Calu3 (cell line): ENCODE measurements at regions of chr4 and their contacts with region 1.

Region 1: DNA sequence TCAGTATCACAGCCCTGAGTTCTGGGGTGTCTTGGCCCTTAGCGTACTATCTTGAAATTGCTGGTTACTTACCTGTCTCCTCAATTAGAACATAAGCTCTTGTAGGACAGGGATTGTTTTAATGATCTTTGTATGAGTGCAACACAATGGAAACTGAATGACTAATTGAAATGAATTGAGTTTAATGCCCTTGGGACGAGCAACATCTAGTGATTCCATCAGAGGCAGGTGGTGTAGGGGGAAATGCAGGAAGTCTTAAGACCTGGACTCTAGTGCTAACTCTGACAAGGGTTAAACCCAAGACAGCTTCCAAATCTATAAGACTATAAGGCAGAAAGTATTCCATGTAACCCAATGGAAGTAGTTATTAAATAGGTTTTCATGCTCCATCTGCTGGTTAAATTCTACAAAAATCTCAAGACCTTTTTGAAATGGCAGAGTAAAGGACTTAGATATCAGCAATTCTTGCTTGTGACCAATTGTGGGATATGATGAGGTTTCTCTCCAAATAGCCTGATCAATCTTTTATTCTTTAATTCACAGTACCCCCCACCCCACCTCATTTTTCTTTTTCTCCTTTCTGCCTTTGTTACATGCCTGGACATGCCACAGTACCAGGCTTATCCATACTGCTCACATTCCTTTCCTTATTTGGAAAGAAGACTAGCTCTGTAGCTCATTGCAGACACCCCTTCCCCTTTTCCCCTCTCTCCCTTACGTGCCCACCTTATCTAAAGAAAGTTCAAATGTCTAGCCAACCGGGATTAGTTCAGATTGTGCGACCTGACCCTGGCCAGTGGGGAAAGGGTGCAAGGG is 340.8 kb downstream of the PAPSS1 start:
- DNase-seq: no peak
- H3K4me3 Mint-ChIP-seq: no peak overlapping the region
- H3K27ac Mint-ChIP-seq: no peak overlapping the region
- H3K4me1 Mint-ChIP-seq: no peaks in the 10 kb centered on the region
- H3K27me3 Mint-ChIP-seq: no peaks in the 10 kb centered on the region
- CTCF ChIP-seq: no peak

Region 2: GRCh38 chr4:107050525-107051135 is 328.6 kb before region 1 on chr4:
- CTCF ChIA-PET with region 1: no interaction called
- intact Hi-C with region 1: loop called (anchors 10 kb)
- DNase-seq: no peak
- H3K4me3 Mint-ChIP-seq: no peak overlapping the region
- H3K27ac Mint-ChIP-seq: no peak overlapping the region
- H3K4me1 Mint-ChIP-seq: no peaks in the 10 kb centered on the region
- H3K27me3 Mint-ChIP-seq: no peaks in the 10 kb centered on the region
- CTCF ChIP-seq: peak; percentile 20

Region 3: DNA sequence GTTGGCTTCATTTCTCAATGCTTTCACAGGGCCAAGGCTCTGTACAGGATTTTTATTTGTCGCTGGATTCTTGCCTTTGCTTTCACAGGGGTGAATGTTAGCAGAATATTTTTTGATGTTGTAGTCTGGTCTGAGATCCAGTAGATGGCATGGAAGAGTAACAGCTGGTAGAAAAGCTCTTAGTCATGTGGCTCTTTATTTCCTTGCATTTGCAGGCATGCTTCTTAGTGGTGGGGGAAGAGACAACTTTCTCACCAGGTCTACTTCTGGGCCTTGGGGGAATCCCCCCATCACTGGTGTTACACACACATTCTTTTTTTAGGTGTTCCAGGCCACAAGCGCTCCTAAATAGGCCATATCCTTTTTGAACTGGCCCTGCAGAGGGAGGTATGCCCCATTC is 284.9 kb before region 1 on chr4:
- CTCF ChIA-PET with region 1: no interaction called
- intact Hi-C with region 1: loop called (anchors 1 kb)
- DNase-seq: no peak
- H3K4me3 Mint-ChIP-seq: no peak overlapping the region
- H3K27ac Mint-ChIP-seq: no peak overlapping the region
- H3K4me1 Mint-ChIP-seq: no peaks in the 10 kb centered on the region
- H3K27me3 Mint-ChIP-seq: no peaks in the 10 kb centered on the region
- CTCF ChIP-seq: peak; percentile 18